ENCODE measurements at regions of chr22 and their contacts with region 1.

Region 1: GRCh38 chr22:45831394-45831793 is 145.6 kb downstream of the WNT7B start:
- DNase-seq: no peak
- ATAC-seq: no peak
- H3K4me3 ChIP-seq: no peak overlapping the region
- H3K4me3 Mint-ChIP-seq: no peak overlapping the region
- H3K27ac ChIP-seq: no peak overlapping the region
- H3K27ac Mint-ChIP-seq: no peak overlapping the region
- H3K4me1 ChIP-seq: no peaks in the 10 kb centered on the region
- H3K4me1 Mint-ChIP-seq: peaks cover 14% of the 10 kb centered on the region
- H3K27me3 ChIP-seq: no peaks in the 10 kb centered on the region
- H3K27me3 Mint-ChIP-seq: no peaks in the 10 kb centered on the region
- CTCF ChIP-seq: peak; percentile 9

Region 2: GRCh38 chr22:45731798-45732495 is 99.4 kb before region 1 on chr22:
- CTCF ChIA-PET with region 1: interaction called, 6 read pairs
- POLR2A ChIA-PET with region 1: no interaction called
- intact Hi-C with region 1: loop called (anchors 1 kb)
- DNase-seq: no peak
- ATAC-seq: no peak
- H3K4me3 ChIP-seq: no peak overlapping the region
- H3K4me3 Mint-ChIP-seq: no peak overlapping the region
- H3K27ac ChIP-seq: no peak overlapping the region
- H3K27ac Mint-ChIP-seq: no peak overlapping the region
- H3K4me1 ChIP-seq: no peaks in the 10 kb centered on the region
- H3K4me1 Mint-ChIP-seq: peaks cover 4% of the 10 kb centered on the region
- H3K27me3 ChIP-seq: no peaks in the 10 kb centered on the region
- H3K27me3 Mint-ChIP-seq: no peaks in the 10 kb centered on the region
- CTCF ChIP-seq: no peak